Naive thymus-derived CD4-positive, alpha-beta T cell (primary cell): ENCODE measurements at regions of chr19 and their contacts with region 1.

Region 1: DNA sequence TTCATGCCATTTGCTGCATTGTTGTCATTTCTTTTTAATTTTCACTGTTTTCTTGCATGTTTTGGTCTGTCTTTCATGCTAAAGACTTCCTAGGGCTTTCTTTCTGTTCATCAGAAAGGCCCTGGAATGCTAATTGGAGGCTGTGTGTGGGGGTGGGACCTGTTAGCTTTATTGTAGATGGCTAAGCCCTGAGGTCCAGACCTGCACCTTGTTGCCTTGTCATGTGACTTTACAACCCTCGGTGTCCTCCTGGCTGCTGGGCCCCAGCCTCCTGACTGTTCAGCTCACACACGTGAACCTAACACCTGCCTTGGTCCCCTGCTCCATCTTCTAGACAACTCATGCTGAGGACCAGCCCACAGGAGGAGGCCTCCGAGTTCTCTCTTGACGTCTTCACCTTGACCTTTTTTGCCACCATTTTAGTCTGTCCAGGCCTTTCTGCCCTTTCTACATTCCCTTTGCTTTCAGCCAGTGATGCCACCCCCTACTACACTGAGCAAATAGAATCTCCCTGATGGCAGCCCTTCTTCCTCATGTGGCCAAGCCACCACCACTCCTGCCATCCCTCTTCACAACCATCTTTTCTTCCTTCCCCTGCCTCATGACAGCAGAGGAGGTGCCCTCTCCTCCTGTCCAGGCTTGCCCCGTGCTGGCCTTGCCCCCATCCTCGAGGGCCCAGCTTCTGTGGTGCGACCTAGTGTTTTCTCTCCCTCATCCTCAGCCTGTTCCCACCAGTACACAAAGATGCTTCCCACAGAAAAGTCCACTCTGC is 41.4 kb upstream of the GPI start:
- DNase-seq: no peak
- ATAC-seq: no peak
- H3K4me3 ChIP-seq: no peak overlapping the region
- H3K4me3 Mint-ChIP-seq: peak overlapping the region in 1 of 10 donors; percentile 29
- H3K27ac ChIP-seq: no peak overlapping the region
- H3K27ac Mint-ChIP-seq: peak overlapping the region in 4 of 9 donors; percentile 5 to 77 (median 41)
- H3K4me1 ChIP-seq: peaks cover 0 to 2% of the 10 kb centered on the region in 2 donors
- H3K4me1 Mint-ChIP-seq: peaks cover 0 to 49% (median 21%) of the 10 kb centered on the region in 7 donors
- H3K27me3 ChIP-seq: no peaks in the 10 kb centered on the region
- H3K27me3 Mint-ChIP-seq: no peaks in the 10 kb centered on the region

Region 2: GRCh38 chr19:33639035-33639681 is 684.5 kb before region 1 on chr19:
- CTCF ChIA-PET with region 1: no interaction called
- POLR2A ChIA-PET with region 1: no interaction called
- intact Hi-C with region 1: no loop called
- DNase-seq: no peak
- ATAC-seq: no peak
- H3K4me3 ChIP-seq: no peak overlapping the region
- H3K4me3 Mint-ChIP-seq: no peak overlapping the region
- H3K27ac ChIP-seq: no peak overlapping the region
- H3K27ac Mint-ChIP-seq: no peak overlapping the region
- H3K4me1 ChIP-seq: no peaks in the 10 kb centered on the region
- H3K4me1 Mint-ChIP-seq: no peaks in the 10 kb centered on the region
- H3K27me3 ChIP-seq: no peaks in the 10 kb centered on the region
- H3K27me3 Mint-ChIP-seq: peaks cover 0 to 34% (median 29%) of the 10 kb centered on the region in 5 donors

Region 3: DNA sequence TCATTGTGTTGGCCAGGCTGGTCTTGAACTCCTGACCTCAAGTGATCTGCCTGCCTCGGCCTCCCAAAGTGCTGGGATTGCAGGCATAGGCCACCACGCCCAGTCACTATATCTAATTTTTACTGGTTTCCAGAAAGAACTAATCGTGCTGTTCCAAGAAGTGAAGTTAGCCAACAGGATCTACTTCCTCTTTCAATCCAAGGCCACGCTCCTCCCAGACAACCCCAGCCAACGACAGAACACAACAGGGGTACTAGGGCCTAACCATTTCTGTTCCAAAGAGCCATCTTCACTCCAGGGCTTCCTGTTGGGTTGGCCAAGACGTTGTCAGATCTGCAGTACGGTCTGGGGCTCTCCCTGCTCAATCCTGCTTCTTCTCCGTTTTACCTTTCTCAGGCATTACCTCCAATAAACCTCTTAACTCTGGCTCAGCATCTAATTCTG is 158.3 kb before region 1 on chr19:
- CTCF ChIA-PET with region 1: no interaction called
- POLR2A ChIA-PET with region 1: no interaction called
- intact Hi-C with region 1: no loop called
- DNase-seq: no peak
- ATAC-seq: no peak
- H3K4me3 ChIP-seq: no peak overlapping the region
- H3K4me3 Mint-ChIP-seq: no peak overlapping the region
- H3K27ac ChIP-seq: no peak overlapping the region
- H3K27ac Mint-ChIP-seq: no peak overlapping the region
- H3K4me1 ChIP-seq: no peaks in the 10 kb centered on the region
- H3K4me1 Mint-ChIP-seq: peaks cover 0 to 9% (median 0%) of the 10 kb centered on the region in 7 donors
- H3K27me3 ChIP-seq: no peaks in the 10 kb centered on the region
- H3K27me3 Mint-ChIP-seq: peaks cover 0 to 8% (median 0%) of the 10 kb centered on the region in 5 donors

Region 4: GRCh38 chr19:34308381-34309367 is 14.9 kb before region 1 on chr19:
- CTCF ChIA-PET with region 1: no interaction called
- POLR2A ChIA-PET with region 1: interaction called, 4 read pairs
- intact Hi-C with region 1: loop called in 1 of 2 experiments (anchors 2 kb)
- DNase-seq: peak in 7 of 9 donors; percentile 53 to 85 (median 78)
- ATAC-seq: peak; percentile 88
- H3K4me3 ChIP-seq: no peak overlapping the region
- H3K4me3 Mint-ChIP-seq: peak overlapping the region in 9 of 10 donors; percentile 12 to 87 (median 62)
- H3K27ac ChIP-seq: peak overlapping the region; percentile 52
- H3K27ac Mint-ChIP-seq: peak overlapping the region in 8 of 9 donors; percentile 78 to 99 (median 96)
- H3K4me1 ChIP-seq: peaks cover 8 to 36% of the 10 kb centered on the region in 2 donors
- H3K4me1 Mint-ChIP-seq: peaks cover 15 to 79% (median 74%) of the 10 kb centered on the region in 7 donors
- H3K27me3 ChIP-seq: no peaks in the 10 kb centered on the region
- H3K27me3 Mint-ChIP-seq: no peaks in the 10 kb centered on the region